Heart left ventricle (tissue), 16 donors: ENCODE measurements at regions of chr9 and their contacts with region 1.

Region 1: DNA sequence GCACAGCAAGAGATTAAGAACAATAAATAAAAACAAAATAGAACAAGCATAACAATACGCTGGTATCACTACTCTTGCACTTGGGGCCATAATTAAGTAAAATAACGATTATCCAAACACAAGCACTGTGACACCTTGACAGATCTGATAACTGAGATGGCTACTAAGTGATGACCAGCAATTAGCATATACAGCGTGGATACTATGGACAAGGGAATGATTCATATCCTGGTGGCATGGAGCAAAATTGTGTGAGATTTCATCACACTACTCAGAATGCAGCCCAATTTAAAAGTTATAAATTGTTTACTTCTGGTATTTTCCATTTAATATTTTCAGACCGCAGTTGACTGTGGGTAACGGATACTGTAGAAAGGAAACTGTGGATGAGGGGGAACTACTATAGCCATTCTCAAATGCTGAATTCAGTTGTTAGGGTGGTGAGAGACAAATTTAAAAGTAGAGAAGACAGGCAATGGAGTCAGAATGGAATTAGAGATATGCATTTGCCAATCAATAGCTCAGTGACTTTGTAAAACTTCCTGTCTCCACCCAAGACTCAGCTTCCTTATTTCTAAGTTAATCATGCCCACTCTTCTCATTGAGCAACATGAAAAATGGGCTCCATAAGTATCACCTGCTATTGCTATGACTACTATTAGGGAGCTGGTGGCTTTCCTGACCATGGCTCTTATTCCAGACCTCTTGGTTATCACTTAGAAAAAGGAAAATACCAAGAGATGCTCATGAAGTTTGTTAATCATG is 300.8 kb downstream of the TRIM32 start:
- DNase-seq: no peak
- ATAC-seq: no peak
- H3K4me3 ChIP-seq: no peak overlapping the region
- H3K27ac ChIP-seq: no peak overlapping the region
- H3K4me1 ChIP-seq: no peaks in the 10 kb centered on the region
- H3K27me3 ChIP-seq: peaks cover 0 to 5% (median 0%) of the 10 kb centered on the region in 9 donors
- CTCF ChIP-seq: no peak
- POLR2A ChIP-seq: no peak

Region 2: GRCh38 chr9:116939614-116940013 is 48.3 kb before region 1 on chr9:
- intact Hi-C with region 1: loop called in 1 of 10 experiments (anchors 10 kb)
- DNase-seq: no peak
- ATAC-seq: no peak
- H3K4me3 ChIP-seq: no peak overlapping the region
- H3K27ac ChIP-seq: no peak overlapping the region
- H3K4me1 ChIP-seq: no peaks in the 10 kb centered on the region
- H3K27me3 ChIP-seq: peaks cover 0 to 2% (median 0%) of the 10 kb centered on the region in 9 donors
- CTCF ChIP-seq: no peak
- POLR2A ChIP-seq: no peak